Heart right ventricle (tissue), 16 donors: ENCODE measurements at regions of chr15 and their contacts with region 1.

Region 1: DNA sequence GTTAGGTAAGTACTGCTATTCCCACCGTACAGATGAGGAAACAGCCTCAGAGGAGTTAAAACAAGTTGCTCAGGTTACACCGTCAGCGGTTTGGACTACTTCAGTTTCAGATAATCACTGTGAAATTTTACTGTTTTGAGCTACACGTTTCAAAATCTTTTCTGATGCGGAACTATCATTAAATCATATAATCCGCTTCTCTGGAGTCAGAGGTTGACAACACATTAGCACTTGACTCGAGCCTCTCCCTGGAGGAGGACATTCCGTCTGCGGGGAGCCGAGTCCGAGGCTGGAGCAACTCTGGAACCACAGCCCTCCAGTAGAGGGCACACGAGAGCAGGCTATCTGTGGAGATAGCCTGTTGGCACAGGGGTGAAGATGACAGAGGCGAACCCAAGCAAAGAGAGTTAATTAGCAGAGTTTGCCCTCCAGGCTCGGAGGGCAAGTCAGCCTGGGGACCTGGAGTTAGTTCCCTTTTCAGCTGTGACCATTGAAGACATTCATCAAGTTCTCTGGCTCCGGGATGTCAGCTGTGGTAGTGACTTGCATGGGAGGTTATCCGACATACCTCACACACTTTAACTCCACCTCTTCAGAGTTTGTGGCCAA is 131.2 kb downstream of the IGF1R start:
- DNase-seq: peak; percentile 83 to 84
- ATAC-seq: peak; percentile 80 to 92 (median 90)
- H3K4me3 ChIP-seq: no peak overlapping the region
- H3K27ac ChIP-seq: peak overlapping the region in 7 of 10 donors; percentile 6 to 56 (median 30)
- H3K4me1 ChIP-seq: peaks cover 0 to 51% (median 42%) of the 10 kb centered on the region in 9 donors
- H3K27me3 ChIP-seq: no peaks in the 10 kb centered on the region
- CTCF ChIP-seq: peak; percentile 82 to 97 (median 95)

Region 2: GRCh38 chr15:98518823-98519561 is 260.6 kb before region 1 on chr15:
- intact Hi-C with region 1: loop called in 1 of 10 experiments (anchors 10 kb)
- DNase-seq: peak in 1 of 2 donors; percentile 59
- ATAC-seq: peak; percentile 77 to 88 (median 82)
- H3K4me3 ChIP-seq: no peak overlapping the region
- H3K27ac ChIP-seq: no peak overlapping the region
- H3K4me1 ChIP-seq: peaks cover 0 to 6% (median 0%) of the 10 kb centered on the region in 9 donors
- H3K27me3 ChIP-seq: peaks cover 0 to 11% (median 0%) of the 10 kb centered on the region in 7 donors
- CTCF ChIP-seq: peak; percentile 76 to 89 (median 79)

Region 3: GRCh38 chr15:98668566-98669308 is 110.8 kb before region 1 on chr15:
- intact Hi-C with region 1: loop called in 2 of 10 experiments (anchors 5 to 10 kb)
- DNase-seq: no peak
- ATAC-seq: peak in 5 of 8 donors; percentile 12 to 31 (median 21)
- H3K4me3 ChIP-seq: no peak overlapping the region
- H3K27ac ChIP-seq: peak overlapping the region in 8 of 10 donors; percentile 21 to 87 (median 72)
- H3K4me1 ChIP-seq: peaks cover 16 to 98% (median 77%) of the 10 kb centered on the region in 9 donors
- H3K27me3 ChIP-seq: no peaks in the 10 kb centered on the region
- CTCF ChIP-seq: no peak

Region 4: GRCh38 chr15:98845107-98845884 is 65.7 kb after region 1 on chr15:
- intact Hi-C with region 1: loop called in 2 of 10 experiments (anchors 5 kb)
- DNase-seq: peak in 1 of 2 donors; percentile 13
- ATAC-seq: no peak
- H3K4me3 ChIP-seq: no peak overlapping the region
- H3K27ac ChIP-seq: no peak overlapping the region
- H3K4me1 ChIP-seq: peaks cover 5 to 58% (median 39%) of the 10 kb centered on the region in 9 donors
- H3K27me3 ChIP-seq: no peaks in the 10 kb centered on the region
- CTCF ChIP-seq: no peak

Region 5: GRCh38 chr15:98954411-98954810 is 174.8 kb after region 1 on chr15:
- intact Hi-C with region 1: no loop called
- DNase-seq: peak; percentile 69 to 85
- ATAC-seq: peak; percentile 72 to 92 (median 82)
- H3K4me3 ChIP-seq: no peak overlapping the region
- H3K27ac ChIP-seq: peak overlapping the region; percentile 22 to 84 (median 74)
- H3K4me1 ChIP-seq: peaks cover 16 to 60% (median 33%) of the 10 kb centered on the region in 9 donors
- H3K27me3 ChIP-seq: no peaks in the 10 kb centered on the region
- CTCF ChIP-seq: no peak

Region 6: DNA sequence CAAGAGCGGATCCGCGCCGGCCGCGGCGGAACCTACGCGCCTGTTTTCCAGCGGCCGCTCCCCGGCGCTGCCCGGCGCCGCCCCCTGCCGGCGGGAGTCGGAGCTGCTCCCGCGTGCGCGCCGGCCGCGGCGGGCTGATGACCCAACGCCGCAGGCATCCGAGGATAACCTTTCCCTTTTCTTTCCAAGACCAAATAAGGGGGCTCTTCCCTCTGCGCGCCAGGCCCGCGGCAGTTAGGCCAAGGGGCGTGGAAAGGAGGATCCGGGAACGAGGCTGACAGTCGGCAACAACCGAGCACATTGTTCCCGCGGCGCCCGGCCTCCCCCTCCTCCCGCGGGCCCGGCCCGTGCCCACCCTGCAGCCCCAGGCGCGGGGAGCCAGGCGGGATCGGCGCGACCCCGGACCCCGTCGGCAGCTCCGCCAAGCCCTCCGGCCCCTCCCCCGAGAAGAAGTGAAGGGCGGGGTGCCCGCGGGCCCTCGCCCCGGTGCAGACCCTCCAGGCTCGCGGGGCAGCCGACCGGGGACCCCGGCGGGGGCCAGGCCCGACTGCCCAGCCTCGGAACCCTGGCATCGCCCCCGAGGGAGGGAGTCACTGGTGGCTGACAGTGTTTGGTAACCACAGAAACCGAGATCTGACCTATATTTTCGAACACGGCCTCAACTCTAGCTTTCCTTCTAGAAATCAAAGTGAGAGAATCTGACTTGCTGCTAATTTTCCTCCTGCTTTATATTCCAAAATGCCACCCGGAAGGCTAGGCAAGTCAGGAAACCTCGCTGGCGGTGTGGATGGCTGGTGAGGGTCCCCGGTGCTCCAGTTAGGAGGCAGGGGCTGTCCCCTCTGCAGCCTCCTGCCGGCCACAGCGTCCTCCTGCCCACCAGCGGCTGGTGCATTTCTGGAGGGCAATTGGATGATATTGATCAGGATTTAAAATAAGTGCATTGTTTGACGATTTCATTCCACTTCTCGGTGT is 279.7 kb after region 1 on chr15:
- intact Hi-C with region 1: loop called in 6 of 10 experiments (anchors 2 to 10 kb)
- DNase-seq: peak; percentile 75 to 85
- ATAC-seq: peak; percentile 74 to 96 (median 87)
- H3K4me3 ChIP-seq: peak overlapping the region; percentile 30 to 65 (median 58)
- H3K27ac ChIP-seq: peak overlapping the region; percentile 43 to 91 (median 80)
- H3K4me1 ChIP-seq: peaks cover 5 to 30% (median 19%) of the 10 kb centered on the region in 9 donors
- H3K27me3 ChIP-seq: peaks cover 0 to 35% (median 0%) of the 10 kb centered on the region in 7 donors
- CTCF ChIP-seq: peak; percentile 62 to 84 (median 81)

Region 7: GRCh38 chr15:99076552-99077308 is 297.2 kb after region 1 on chr15:
- intact Hi-C with region 1: loop called in 5 of 10 experiments (anchors 5 to 10 kb)
- DNase-seq: peak in 1 of 2 donors; percentile 73
- ATAC-seq: peak; percentile 84 to 91 (median 87)
- H3K4me3 ChIP-seq: peak overlapping the region in 8 of 10 donors; percentile 11 to 50 (median 44)
- H3K27ac ChIP-seq: peak overlapping the region in 1 of 10 donors; percentile 66
- H3K4me1 ChIP-seq: peaks cover 0 to 9% (median 0%) of the 10 kb centered on the region in 9 donors
- H3K27me3 ChIP-seq: peaks cover 0 to 3% (median 0%) of the 10 kb centered on the region in 7 donors
- CTCF ChIP-seq: peak; percentile 78 to 92 (median 91)